Right cardiac atrium (tissue), 5 donors: ENCODE measurements at regions of chr1 and their contacts with region 1.

Region 1: GRCh38 chr1:84620720-84621313 is 46.6 kb upstream of the CTBS start:
- DNase-seq: peak; percentile 79 to 91 (median 89)
- ATAC-seq: peak; percentile 95 to 96
- H3K4me3 ChIP-seq: peak overlapping the region; percentile 48
- H3K27ac ChIP-seq: peak overlapping the region; percentile 26
- H3K4me1 ChIP-seq: no peaks in the 10 kb centered on the region
- H3K27me3 ChIP-seq: no peaks in the 10 kb centered on the region

Region 2: DNA sequence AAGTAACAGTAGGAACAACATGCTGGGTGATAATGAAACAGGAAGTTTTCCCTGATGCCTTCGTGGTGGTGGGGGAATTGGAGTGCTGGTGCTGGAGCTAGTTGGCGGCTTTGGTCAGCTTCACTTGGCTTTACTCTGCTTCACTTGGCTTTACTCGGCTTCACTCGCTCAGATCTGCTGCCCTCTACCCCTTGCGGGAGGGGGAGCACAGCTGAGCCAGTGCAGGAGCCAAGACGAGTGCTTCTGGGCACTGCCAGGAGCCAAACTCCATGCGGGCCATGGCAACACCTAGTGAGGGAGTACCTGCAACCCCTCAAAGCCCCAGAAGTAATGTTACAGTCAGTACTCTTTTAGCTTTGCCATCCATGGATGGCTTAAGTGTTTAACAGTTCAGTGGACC is 487.3 kb before region 1 on chr1:
- intact Hi-C with region 1: loop called in 1 of 4 experiments (anchors 5 kb)
- DNase-seq: peak in 2 of 3 donors; percentile 24 to 37
- ATAC-seq: no peak
- H3K4me3 ChIP-seq: no peak overlapping the region
- H3K27ac ChIP-seq: no peak overlapping the region
- H3K4me1 ChIP-seq: no peaks in the 10 kb centered on the region
- H3K27me3 ChIP-seq: no peaks in the 10 kb centered on the region

Region 3: DNA sequence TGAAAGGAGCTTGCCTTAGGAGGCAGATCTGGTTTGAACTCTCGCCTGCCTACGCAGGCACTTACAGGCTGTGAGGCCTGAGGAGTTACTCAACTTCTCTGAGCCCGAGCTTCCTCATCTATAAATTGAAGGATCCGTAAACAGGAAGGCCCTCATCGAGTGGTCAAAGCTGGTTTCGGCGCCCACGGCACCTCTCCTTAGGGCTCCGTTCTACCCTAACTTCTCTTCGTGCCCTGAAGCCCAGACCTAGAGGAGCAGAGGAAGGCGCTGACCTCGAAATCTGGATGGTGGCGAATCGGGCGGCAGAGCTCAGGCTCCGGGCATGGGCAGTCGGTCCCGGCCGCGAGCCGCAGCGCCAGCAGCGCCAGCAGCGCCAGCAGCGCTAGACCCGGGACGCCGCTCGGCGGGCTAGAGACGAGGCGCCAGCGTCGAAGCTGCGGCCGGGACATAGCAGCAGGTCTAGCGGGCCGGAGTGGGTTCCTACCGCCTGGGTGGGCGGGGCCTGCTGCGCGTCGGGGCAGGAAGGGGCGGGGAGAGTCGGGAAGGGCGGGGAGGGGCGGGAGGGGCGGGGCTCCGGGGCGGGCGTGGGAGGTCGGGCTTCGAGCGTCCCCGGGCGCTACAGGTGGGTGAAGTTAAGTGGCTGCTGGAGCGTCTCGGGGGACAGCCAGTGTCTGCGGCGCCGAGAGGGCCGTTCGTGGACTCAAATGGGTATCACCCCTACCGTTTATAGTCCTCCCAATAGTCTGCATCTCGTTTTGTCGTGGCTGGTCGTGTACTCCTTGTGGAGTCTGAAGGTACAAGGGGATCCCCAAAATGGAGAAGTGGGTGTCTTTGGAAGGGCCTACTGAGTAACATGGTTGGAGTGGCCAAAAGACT is 46.6 kb before region 1 on chr1 and contains the start of gene CTBS:
- intact Hi-C with region 1: loop called in 1 of 4 experiments (anchors 5 kb)
- DNase-seq: peak; percentile 91 to 96 (median 95)
- ATAC-seq: peak; percentile 98 to 99
- H3K4me3 ChIP-seq: peak within 1 kb of the TSS; percentile 75
- H3K27ac ChIP-seq: peak within 1 kb of the TSS; percentile 95
- H3K4me1 ChIP-seq: peaks cover 2% of the 10 kb centered on the region
- H3K27me3 ChIP-seq: no peaks in the 10 kb centered on the region
- total RNA-seq, gene CTBS: 8.4 to 13.3 (median 10.9) TPM